Head of caudate nucleus (tissue), 42 donors: ENCODE measurements at regions of chr1 and their contacts with region 1.

Region 1: GRCh38 chr1:229558571-229559335 is at the start of gene ABCB10:
- DNase-seq: peak; percentile 90 to 99 (median 96)

Region 2: GRCh38 chr1:229579059-229579673 is 20.4 kb after region 1 on chr1:
- intact Hi-C with region 1: loop called (anchors 1 kb)
- DNase-seq: peak; percentile 68 to 95 (median 89)

Region 3: GRCh38 chr1:229625915-229626831 is 67.4 kb after region 1 on chr1 and contains the starts of genes TAF5L and URB2:
- intact Hi-C with region 1: loop called (anchors 1 kb)
- DNase-seq: peak; percentile 68 to 96 (median 91)